Heart left ventricle (tissue), 16 donors: ENCODE measurements at regions of chr7 and their contacts with region 1.

Region 1: DNA sequence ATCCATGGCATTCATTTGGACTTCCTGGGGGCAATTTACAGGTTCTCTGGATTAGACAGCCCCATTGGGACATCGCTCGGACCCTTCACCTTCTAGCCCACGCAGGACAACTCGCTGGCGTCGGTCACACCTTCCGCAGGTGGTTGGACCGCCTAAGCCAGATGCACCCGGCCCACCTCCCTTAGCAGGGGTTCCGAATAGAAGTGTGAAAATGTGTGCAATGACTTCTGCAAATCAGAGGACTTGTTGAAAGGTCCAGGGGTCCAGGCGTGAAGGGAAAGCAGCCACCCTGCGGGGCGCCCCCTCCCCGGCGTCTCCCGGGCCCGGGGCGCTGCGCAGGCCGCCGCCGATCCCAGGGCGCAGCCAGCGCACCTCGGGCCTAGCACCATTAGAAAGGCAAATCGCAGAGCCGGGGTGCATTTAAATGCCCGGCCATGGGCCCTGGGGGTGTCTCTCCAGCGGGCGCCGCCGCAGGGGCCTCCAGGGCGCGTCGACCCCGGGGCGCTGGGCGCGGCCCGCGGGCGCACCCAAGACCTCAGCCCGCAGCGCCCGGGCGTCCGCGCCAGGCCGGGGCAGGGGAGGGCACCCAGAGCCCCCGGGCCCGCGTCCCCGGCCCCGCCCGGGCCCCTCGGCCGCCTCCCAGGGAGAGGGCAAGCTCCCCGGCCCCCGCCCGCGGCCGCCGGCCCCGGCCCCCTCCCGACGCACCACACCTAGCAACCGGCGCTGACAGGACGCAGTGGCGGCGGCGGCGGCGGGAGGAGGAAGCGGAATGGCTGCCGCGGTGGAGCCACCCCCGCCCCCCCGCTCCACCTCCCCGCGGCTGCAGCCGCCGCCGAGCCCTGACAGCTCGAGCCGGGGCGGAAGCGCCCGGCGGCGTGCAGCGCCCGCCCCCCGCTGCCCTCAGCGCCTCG is 1.2 kb downstream of the JAZF1 start:
- DNase-seq: peak; percentile 82 to 91 (median 88)
- ATAC-seq: peak; percentile 44 to 79 (median 74)
- H3K4me3 ChIP-seq: peak overlapping the region; percentile 53 to 96 (median 76)
- H3K27ac ChIP-seq: peak overlapping the region; percentile 77 to 94 (median 85)
- H3K4me1 ChIP-seq: peaks cover 0 to 64% (median 40%) of the 10 kb centered on the region in 12 donors
- H3K27me3 ChIP-seq: no peaks in the 10 kb centered on the region
- CTCF ChIP-seq: no peak
- POLR2A ChIP-seq: no peak

Region 2: DNA sequence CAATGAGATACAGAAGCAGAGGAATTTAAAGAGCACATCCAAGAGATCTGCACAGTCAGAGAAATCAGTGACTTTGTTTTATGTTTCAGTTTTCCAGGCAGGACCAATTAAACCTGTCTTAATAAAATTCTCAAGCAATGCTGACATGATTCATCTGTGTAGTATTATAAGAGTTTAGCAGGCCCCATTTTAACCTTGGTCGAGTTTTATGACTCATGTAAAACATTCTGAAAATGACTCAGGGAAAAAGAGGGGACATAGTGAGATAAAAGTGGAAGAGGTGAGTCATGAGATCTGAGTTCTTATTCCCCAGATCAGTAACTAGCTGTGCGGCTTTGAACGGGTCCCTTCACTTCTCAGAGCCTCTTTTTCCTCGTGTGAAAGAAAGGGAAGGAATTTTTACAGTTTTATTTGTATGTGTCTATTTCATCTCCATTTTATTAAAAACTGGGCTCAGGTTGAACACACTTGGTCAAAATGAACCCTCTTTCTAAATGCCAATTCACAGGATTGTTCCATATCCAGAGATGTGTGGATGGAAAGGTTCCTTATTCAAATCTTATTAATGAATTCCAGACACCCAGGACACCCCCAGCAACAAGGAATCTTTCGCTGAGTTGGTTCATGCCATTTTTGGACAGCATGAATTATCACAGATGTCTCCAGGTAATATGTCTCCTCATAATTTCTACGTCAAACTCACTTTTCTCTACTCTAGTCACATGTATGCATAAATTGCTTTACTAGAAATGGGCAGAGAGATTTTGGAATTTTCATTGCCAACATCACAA is 142.0 kb before region 1 on chr7:
- intact Hi-C with region 1: no loop called
- DNase-seq: no peak
- ATAC-seq: peak; percentile 29 to 95 (median 74)
- H3K4me3 ChIP-seq: no peak overlapping the region
- H3K27ac ChIP-seq: peak overlapping the region in 6 of 12 donors; percentile 27 to 66 (median 36)
- H3K4me1 ChIP-seq: peaks cover 0 to 34% (median 15%) of the 10 kb centered on the region in 12 donors
- H3K27me3 ChIP-seq: no peaks in the 10 kb centered on the region
- CTCF ChIP-seq: no peak
- POLR2A ChIP-seq: no peak

Region 3: GRCh38 chr7:28096713-28097112 is 82.7 kb before region 1 on chr7:
- intact Hi-C with region 1: loop called in 3 of 10 experiments (anchors 5 to 10 kb)
- DNase-seq: peak in 3 of 5 donors; percentile 48 to 57 (median 56)
- ATAC-seq: peak; percentile 48 to 71 (median 66)
- H3K4me3 ChIP-seq: no peak overlapping the region
- H3K27ac ChIP-seq: peak overlapping the region in 4 of 12 donors; percentile 0 to 67 (median 18)
- H3K4me1 ChIP-seq: peaks cover 0 to 35% (median 12%) of the 10 kb centered on the region in 12 donors
- H3K27me3 ChIP-seq: no peaks in the 10 kb centered on the region
- CTCF ChIP-seq: peak; percentile 74 to 91 (median 82)
- POLR2A ChIP-seq: no peak

Region 4: DNA sequence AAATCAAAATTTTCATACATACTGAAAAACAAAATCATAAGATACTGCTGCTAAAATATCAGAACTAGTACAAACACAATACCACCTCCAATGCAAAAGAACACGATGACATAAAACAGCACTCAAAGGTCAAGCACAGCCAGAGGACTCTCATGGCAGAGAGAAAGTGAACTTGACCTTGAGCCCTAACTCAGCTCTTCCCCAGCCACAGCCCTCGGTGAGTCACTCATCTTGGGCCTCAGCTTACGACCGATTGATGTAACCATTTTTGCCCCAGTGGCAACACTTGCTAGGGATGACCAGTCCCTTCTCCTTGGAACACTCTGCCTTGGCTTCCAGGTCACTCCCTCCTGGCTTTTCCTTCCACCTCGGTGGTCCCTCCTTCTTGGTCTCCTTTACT is 76.6 kb before region 1 on chr7:
- intact Hi-C with region 1: loop called in 6 of 10 experiments (anchors 5 to 10 kb)
- DNase-seq: peak in 3 of 5 donors; percentile 33 to 75 (median 54)
- ATAC-seq: peak in 3 of 4 donors; percentile 23 to 79 (median 75)
- H3K4me3 ChIP-seq: no peak overlapping the region
- H3K27ac ChIP-seq: peak overlapping the region; percentile 33 to 92 (median 80)
- H3K4me1 ChIP-seq: peaks cover 0 to 73% (median 22%) of the 10 kb centered on the region in 12 donors
- H3K27me3 ChIP-seq: no peaks in the 10 kb centered on the region
- CTCF ChIP-seq: no peak
- POLR2A ChIP-seq: no peak

Region 5: GRCh38 chr7:28144266-28144665 is 35.1 kb before region 1 on chr7:
- intact Hi-C with region 1: loop called in 1 of 10 experiments (anchors 5 kb)
- DNase-seq: no peak
- ATAC-seq: peak in 3 of 4 donors; percentile 30 to 38 (median 36)
- H3K4me3 ChIP-seq: no peak overlapping the region
- H3K27ac ChIP-seq: no peak overlapping the region
- H3K4me1 ChIP-seq: peaks cover 0 to 37% (median 10%) of the 10 kb centered on the region in 12 donors
- H3K27me3 ChIP-seq: no peaks in the 10 kb centered on the region
- CTCF ChIP-seq: peak in 4 of 12 donors; percentile 7 to 23 (median 20)
- POLR2A ChIP-seq: no peak

Region 6: GRCh38 chr7:28239823-28240204 is 60.4 kb after region 1 on chr7:
- intact Hi-C with region 1: no loop called
- DNase-seq: no peak
- ATAC-seq: no peak
- H3K4me3 ChIP-seq: no peak overlapping the region
- H3K27ac ChIP-seq: no peak overlapping the region
- H3K4me1 ChIP-seq: peaks cover 0 to 19% (median 0%) of the 10 kb centered on the region in 12 donors
- H3K27me3 ChIP-seq: no peaks in the 10 kb centered on the region
- CTCF ChIP-seq: no peak
- POLR2A ChIP-seq: no peak

Region 7: DNA sequence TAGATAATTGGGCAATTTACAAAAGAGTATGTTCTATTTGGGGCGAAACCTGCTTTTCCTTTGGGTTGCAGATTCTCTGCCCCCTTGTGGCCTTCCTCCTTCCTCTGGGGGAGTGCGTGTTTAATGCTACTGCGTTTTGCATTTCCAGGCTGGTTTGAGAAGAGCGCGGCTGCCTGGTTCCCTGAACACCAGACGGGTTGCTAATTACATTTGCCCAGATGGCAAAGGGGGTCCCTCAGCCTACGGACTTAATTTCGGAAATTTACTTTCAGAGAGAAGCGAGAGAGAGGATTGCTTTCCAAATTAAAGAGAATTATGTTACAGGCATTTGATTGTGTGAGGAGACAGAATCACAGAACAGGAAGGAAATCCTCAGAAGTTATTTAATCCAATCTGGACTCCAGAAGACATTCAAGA is 93.1 kb after region 1 on chr7:
- intact Hi-C with region 1: loop called in 3 of 10 experiments (anchors 5 kb)
- DNase-seq: peak in 4 of 5 donors; percentile 33 to 44 (median 41)
- ATAC-seq: peak in 3 of 4 donors; percentile 59 to 83 (median 80)
- H3K4me3 ChIP-seq: peak overlapping the region in 8 of 12 donors; percentile 17 to 35 (median 28)
- H3K27ac ChIP-seq: no peak overlapping the region
- H3K4me1 ChIP-seq: peaks cover 0 to 5% (median 0%) of the 10 kb centered on the region in 12 donors
- H3K27me3 ChIP-seq: no peaks in the 10 kb centered on the region
- CTCF ChIP-seq: peak; percentile 46 to 75 (median 60)
- POLR2A ChIP-seq: no peak